ENCODE measurements at regions of chr20 and their contacts with region 1.

Region 1: DNA sequence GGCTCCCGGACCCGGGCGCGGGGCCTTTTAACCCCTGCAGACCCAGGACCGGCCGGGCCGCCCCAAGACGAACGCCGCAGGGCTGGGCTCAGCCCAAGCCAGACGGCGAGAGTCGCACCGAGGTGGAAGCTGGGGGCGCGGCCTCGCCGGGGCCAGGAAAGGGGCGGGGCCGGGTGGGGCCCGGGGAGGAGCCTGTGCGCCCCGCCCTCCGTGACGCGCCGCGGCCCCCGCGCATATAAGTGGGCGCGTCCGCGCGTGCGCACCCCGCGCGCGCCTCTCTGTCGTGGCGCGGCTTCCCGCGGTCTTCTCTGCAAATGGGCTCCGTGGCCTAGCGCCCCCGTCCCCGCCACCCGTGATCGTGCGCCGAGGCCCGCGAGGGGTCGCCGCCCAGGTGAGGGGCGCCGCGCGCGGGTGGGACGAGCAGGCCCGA is at the start of gene PPDPF:
- DNase-seq: peak; percentile 74 to 94 (median 86)
- ATAC-seq: peak; percentile 78
- H3K4me3 Mint-ChIP-seq: peak within 1 kb of the TSS; percentile 74 to 89 (median 82)
- H3K27ac Mint-ChIP-seq: peak within 1 kb of the TSS; percentile 44 to 92 (median 84)
- H3K4me1 Mint-ChIP-seq: peaks cover 12 to 24% (median 14%) of the 10 kb centered on the region in 4 donors
- H3K27me3 Mint-ChIP-seq: peaks cover 0 to 2% (median 0%) of the 10 kb centered on the region in 5 donors
- polyA plus RNA-seq, gene PPDPF: 47.4 to 93.1 (median 78.1) TPM

Region 2: GRCh38 chr20:63409459-63410435 is 110.8 kb before region 1 on chr20:
- POLR2A ChIA-PET with region 1: no interaction called
- DNase-seq: peak in 4 of 10 donors; percentile 7 to 16 (median 14)
- ATAC-seq: peak in 1 of 2 donors; percentile 45
- H3K4me3 Mint-ChIP-seq: peak overlapping the region in 1 of 10 donors; percentile 41
- H3K27ac Mint-ChIP-seq: peak overlapping the region in 1 of 10 donors; percentile 69
- H3K4me1 Mint-ChIP-seq: peaks cover 0 to 10% (median 5%) of the 10 kb centered on the region in 4 donors
- H3K27me3 Mint-ChIP-seq: peaks cover 3 to 18% (median 4%) of the 10 kb centered on the region in 5 donors

Region 3: DNA sequence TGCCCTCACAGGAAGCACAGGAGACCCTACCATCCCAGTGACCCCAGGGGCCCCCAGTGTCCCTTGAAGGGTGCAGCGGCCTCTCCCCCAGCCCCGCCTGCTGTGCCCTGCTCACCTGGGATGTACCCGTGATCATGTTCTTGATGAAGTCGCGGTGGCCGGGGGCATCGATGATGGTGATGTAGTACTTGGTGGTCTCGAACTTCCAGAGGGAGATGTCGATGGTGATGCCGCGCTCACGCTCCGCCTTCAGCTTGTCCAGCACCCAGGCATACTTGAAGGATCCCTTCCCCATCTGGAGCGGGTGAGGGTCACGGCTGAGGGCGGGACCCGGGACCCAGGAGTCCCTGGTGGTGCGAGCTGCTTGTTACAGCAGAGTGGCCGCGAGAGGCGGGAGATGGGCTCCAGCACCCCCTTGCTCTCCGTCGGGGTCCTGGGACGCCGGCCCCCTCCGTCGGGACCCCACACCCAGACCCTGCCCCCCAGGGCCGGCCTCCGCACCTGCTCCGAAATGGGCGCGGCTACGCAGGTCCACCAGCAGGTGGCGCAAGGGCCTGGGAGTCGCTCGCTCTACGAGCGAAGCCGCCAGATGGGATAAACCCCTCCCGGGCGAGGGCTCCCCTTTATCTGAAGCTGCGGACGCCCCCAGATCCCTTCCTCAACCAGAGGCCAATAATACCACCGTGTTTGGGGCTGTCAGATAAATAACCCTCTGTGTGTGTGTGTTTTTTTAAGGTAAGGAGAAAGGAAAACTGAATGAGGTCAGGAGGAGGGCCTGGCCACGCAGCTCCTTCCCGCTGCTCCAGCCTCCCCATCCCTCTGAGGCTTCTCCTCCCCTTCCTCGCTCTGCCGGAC is 24.6 kb before region 1 on chr20:
- POLR2A ChIA-PET with region 1: interaction called, 41 read pairs
- DNase-seq: peak; percentile 56 to 87 (median 75)
- ATAC-seq: peak; percentile 74 to 76
- H3K4me3 Mint-ChIP-seq: peak overlapping the region; percentile 26 to 85 (median 70)
- H3K27ac Mint-ChIP-seq: peak overlapping the region in 1 of 10 donors; percentile 53
- H3K4me1 Mint-ChIP-seq: peaks cover 0 to 4% (median 1%) of the 10 kb centered on the region in 4 donors
- H3K27me3 Mint-ChIP-seq: peaks cover 2 to 37% (median 19%) of the 10 kb centered on the region in 5 donors

Region 4: DNA sequence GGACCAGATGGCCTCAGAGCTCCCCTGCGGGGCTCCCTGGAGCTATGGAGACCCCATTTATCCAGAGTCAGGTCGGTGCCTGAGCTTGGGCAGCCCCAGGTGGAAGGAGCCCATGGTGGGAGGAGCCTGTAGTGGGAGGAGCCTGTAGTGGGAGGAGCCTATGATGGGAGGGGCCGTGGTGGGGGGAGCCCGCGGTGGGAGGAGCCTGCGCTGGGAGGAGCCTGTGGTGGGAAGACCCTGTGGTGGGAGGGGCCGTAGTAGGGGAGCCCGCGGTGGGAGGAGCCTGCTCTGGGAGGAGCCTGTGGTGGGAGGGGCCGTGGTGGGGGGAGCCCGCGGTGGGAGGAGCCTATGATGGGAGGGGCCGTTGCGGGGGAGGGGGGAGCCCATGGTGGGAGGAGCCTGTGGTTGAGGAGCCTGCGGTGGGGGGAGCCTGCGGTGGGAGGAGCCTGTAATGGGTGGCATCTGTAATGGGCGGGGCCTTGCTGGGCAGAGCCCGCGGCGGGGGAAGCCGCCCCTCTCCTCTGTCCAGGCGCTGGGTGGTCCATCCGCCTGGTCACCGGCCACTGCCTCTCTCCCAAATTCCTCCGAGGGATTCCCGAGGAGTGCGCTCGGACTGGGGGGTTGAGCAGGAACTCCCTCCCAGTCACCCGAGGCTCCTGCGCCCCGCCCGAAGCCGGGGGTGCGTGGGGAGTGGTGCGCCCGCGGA is 32.9 kb after region 1 on chr20:
- POLR2A ChIA-PET with region 1: interaction called, 14 read pairs
- DNase-seq: peak; percentile 78 to 94 (median 88)
- ATAC-seq: peak; percentile 69 to 73
- H3K4me3 Mint-ChIP-seq: peak overlapping the region; percentile 67 to 85 (median 79)
- H3K27ac Mint-ChIP-seq: peak overlapping the region in 9 of 10 donors; percentile 77 to 97 (median 91)
- H3K4me1 Mint-ChIP-seq: peaks cover 11 to 34% (median 28%) of the 10 kb centered on the region in 4 donors
- H3K27me3 Mint-ChIP-seq: peaks cover 0 to 13% (median 2%) of the 10 kb centered on the region in 5 donors

Region 5: GRCh38 chr20:63627129-63627750 is 106.7 kb after region 1 on chr20:
- POLR2A ChIA-PET with region 1: interaction called, 17 read pairs
- DNase-seq: peak; percentile 90 to 99 (median 95)
- ATAC-seq: peak; percentile 82 to 83
- H3K4me3 Mint-ChIP-seq: peak overlapping the region; percentile 91 to 99 (median 98)
- H3K27ac Mint-ChIP-seq: peak overlapping the region; percentile 43 to 99 (median 96)
- H3K4me1 Mint-ChIP-seq: peaks cover 16 to 59% (median 45%) of the 10 kb centered on the region in 4 donors
- H3K27me3 Mint-ChIP-seq: no peaks in the 10 kb centered on the region

Region 6: DNA sequence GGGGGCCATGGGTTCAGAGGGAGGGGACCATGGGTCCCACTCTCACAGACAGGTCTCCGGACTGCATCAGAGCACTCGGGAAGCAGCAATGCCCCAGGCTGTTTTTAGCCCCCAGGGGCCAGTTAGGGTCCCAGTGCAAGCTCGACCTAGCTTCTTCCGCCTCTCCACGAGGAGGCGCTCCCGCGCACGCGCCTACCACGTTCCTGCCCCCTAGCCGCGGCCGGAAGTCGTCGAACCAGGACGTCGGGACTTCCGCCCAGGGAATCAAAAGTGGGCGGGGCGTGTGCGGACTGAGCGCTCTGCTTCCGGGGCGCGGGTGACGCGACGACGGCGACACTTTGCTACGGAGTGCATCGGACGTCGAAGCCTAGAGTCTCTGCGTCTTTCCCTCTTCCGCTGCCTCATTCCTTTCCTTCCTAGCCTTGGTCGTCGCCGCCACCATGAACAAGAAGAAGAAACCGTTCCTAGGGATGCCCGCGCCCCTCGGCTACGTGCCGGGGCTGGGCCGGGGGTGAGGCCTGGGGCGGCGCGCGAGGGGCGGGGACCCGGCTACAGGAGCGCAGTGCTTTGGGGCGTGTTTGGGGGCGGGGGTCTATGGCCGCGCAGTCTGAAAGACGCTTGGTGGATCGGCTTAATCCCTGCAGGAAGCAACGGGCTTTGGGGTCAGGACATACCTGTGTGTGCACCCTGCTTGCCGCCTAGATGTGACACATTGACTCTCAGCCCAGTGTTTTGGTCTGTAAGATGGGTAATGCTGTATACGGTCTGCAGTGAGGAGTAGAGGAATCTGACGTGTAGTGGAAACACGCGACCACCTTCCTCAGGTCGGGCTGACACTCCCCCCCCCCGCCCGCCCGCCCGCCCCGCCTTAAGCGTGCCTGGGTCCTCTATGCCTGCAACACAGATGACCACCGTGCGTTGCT is 460.5 kb after region 1 on chr20 and contains the start of gene PRPF6:
- POLR2A ChIA-PET with region 1: interaction called, 10 read pairs
- DNase-seq: peak; percentile 89 to 97 (median 94)
- ATAC-seq: peak; percentile 56 to 65
- H3K4me3 Mint-ChIP-seq: peak within 1 kb of the TSS; percentile 84 to 98 (median 96)
- H3K27ac Mint-ChIP-seq: peak within 1 kb of the TSS; percentile 94 to 98 (median 96)
- H3K4me1 Mint-ChIP-seq: peaks cover 44 to 69% (median 65%) of the 10 kb centered on the region in 4 donors
- H3K27me3 Mint-ChIP-seq: no peaks in the 10 kb centered on the region
- polyA plus RNA-seq, gene PRPF6: 67.2 to 110 (median 85.9) TPM

Measured in naive thymus-derived CD8-positive, alpha-beta T cell (primary cell).